HCT116 (cell line): ENCODE measurements at regions of chr13 and their contacts with region 1.

Region 1: DNA sequence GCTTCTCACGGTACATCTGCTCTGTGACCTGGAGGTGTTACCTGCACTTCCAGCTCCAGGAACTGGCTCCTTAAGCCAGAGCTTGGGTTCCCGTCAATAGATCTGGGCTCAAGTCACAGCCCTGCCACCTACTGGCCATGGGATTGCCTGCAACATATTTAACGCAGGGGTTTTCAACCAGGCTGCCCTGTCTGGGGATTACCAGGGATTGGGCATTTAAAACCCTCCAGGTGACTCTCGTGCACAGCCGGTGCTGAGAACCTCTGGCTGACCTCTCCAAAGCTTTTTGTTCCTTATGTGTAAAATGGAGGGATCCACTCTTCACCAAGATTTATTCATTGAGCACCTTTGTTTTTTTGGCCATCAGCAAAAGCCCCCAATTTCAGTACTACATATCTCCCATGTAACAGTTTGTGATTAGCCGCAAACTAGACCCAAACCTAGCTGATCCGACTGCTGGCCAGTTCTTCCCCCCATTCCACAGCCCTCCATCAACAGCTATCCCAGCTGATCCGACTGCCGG is 76.6 kb upstream of the STK24 start:
- DNase-seq: peak; percentile 85
- ATAC-seq: peak; percentile 97
- H3K4me3 ChIP-seq: no peak overlapping the region
- H3K27ac ChIP-seq: no peak overlapping the region
- H3K4me1 ChIP-seq: peaks cover 0 to 28% of the 10 kb centered on the region in 2 experiments; a peak in 2 of 4 replicates
- H3K27me3 ChIP-seq: no peaks in the 10 kb centered on the region
- CTCF ChIP-seq: peak; percentile 86 to 94 (median 92)
- POLR2A ChIP-seq: no peak
- RAD21 ChIP-seq: peak; percentile 93

Region 2: DNA sequence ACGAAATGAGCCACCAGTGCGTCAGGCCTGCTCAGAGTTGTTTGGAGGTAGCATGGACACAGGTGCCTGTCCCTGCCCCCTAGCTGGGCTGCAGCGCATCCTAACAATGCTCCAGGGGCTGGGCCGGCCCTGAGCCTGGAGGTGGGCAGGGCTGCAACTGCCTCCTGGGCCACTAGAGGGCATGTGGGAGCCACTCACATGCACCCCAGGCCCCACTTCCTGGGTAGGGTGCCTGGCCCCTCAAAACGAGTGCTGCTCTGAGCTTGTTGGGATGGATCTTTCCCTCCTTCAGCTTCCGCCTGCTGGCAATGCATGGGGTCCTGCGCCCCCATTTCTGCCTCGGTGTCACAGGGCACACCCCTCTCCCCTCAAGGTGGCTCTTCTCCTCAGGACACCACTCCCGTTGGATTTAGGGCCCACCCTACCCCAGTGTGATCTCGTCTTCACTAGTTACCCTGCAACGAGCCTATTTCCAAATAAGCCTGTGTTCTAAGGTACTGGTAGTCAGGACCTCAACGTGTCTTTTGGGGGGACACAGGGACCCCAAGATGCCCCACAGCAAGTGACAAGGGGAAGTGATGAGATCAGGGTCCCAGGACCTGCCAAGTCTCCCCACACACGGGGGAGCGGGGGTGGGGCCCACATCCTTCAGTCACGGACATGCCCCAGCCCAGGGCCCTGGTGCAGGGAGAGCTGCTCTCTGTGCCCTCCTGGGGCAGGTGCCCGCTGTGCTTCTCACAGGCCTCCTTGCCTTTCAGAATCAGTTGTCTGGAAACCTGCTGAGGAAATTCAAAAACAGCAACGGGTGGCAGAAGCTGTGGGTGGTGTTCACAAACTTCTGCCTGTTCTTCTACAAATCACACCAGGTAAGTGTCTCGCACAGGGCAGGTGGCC is 207.9 kb before region 1 on chr13:
- CTCF ChIA-PET with region 1: interaction called, 41 read pairs
- POLR2A ChIA-PET with region 1: interaction called, 3 read pairs
- RAD21 ChIA-PET with region 1: interaction called in 1 of 2 experiments, 6 read pairs
- intact Hi-C with region 1: loop called (anchors 1 kb)
- DNase-seq: peak; percentile 41
- ATAC-seq: peak; percentile 87
- H3K4me3 ChIP-seq: no peak overlapping the region
- H3K27ac ChIP-seq: no peak overlapping the region; the same call in 1 of the 2 replicates
- H3K4me1 ChIP-seq: peaks cover 0 to 35% of the 10 kb centered on the region in 2 experiments; a peak in 2 of 4 replicates
- H3K27me3 ChIP-seq: no peaks in the 10 kb centered on the region
- CTCF ChIP-seq: peak in 2 of 3 experiments; percentile 89 to 97; a peak in 4 of 6 replicates
- POLR2A ChIP-seq: no peak
- RAD21 ChIP-seq: no peak

Region 3: GRCh38 chr13:98466634-98467236 is 186.8 kb before region 1 on chr13:
- CTCF ChIA-PET with region 1: interaction called, 8 read pairs
- POLR2A ChIA-PET with region 1: no interaction called
- RAD21 ChIA-PET with region 1: no interaction called
- intact Hi-C with region 1: loop called (anchors 5 kb)
- DNase-seq: no peak
- ATAC-seq: peak; percentile 91
- H3K4me3 ChIP-seq: no peak overlapping the region
- H3K27ac ChIP-seq: no peak overlapping the region
- H3K4me1 ChIP-seq: peaks cover 0 to 3% of the 10 kb centered on the region in 2 experiments; a peak in 1 of 4 replicates
- H3K27me3 ChIP-seq: no peaks in the 10 kb centered on the region
- CTCF ChIP-seq: peak; percentile 38 to 89 (median 83); a peak in 5 of 6 replicates
- POLR2A ChIP-seq: no peak
- RAD21 ChIP-seq: peak; percentile 48

Region 4: GRCh38 chr13:98576963-98577822 is 76.3 kb before region 1 on chr13 and contains the start of gene STK24:
- CTCF ChIA-PET with region 1: interaction called, 5 read pairs
- POLR2A ChIA-PET with region 1: interaction called, 4 read pairs
- RAD21 ChIA-PET with region 1: interaction called in 1 of 2 experiments, 3 read pairs
- intact Hi-C with region 1: loop called (anchors 2 kb)
- DNase-seq: no peak
- ATAC-seq: peak; percentile 85
- H3K4me3 ChIP-seq: peak within 1 kb of the TSS; percentile 68 to 70
- H3K27ac ChIP-seq: peak within 1 kb of the TSS; percentile 92
- H3K4me1 ChIP-seq: peaks cover 32 to 46% of the 10 kb centered on the region in 2 experiments
- H3K27me3 ChIP-seq: no peaks in the 10 kb centered on the region
- CTCF ChIP-seq: no peak
- POLR2A ChIP-seq: peak; percentile 81
- RAD21 ChIP-seq: no peak
- total RNA-seq, gene STK24: 137 TPM